CD8-positive, alpha-beta memory T cell (primary cell): ENCODE measurements at regions of chr19 and their contacts with region 1.

Region 1: DNA sequence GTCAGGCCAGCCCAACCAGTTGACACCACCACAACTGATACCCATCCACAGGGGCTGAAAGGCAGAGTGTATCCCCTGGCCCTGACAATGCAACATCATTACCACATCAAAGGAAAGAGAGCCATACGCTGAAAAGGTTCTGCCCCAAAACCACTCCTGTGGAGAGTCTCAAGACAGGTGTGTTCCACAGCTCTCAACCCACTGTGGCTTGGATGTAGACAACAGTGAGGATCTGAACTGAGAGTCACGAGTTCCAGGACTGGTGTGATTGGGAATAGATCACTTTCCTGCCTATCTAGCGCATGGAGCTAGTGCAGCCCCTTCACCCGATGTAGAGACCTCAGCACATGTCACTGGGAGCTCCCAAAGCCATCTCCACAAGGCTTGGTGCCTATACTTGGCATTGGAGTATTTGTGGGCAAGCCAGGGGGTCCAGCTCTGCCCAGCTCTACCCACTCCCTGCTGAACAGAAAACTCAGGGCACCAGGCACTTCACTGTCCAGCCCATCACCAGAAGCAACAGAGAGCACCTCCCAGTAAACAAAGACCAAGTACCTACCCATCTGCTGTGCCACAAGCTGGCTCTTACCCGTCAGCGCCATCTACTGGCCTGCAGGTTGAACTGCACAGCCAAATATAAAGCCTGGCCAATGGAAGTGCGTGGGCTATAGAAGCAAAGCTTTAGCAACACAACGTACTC is 579.5 kb downstream of the UQCRFS1 start:
- DNase-seq: peak in 4 of 5 donors; percentile 6 to 50 (median 29)
- H3K4me3 ChIP-seq: no peak overlapping the region
- H3K4me3 Mint-ChIP-seq: peak overlapping the region in 2 of 7 donors; percentile 29 to 63
- H3K27ac ChIP-seq: no peak overlapping the region
- H3K27ac Mint-ChIP-seq: peak overlapping the region in 6 of 8 donors; percentile 68 to 85 (median 80)
- H3K4me1 ChIP-seq: peaks cover 7% of the 10 kb centered on the region
- H3K4me1 Mint-ChIP-seq: peaks cover 15 to 26% (median 22%) of the 10 kb centered on the region in 3 donors
- H3K27me3 ChIP-seq: no peaks in the 10 kb centered on the region
- H3K27me3 Mint-ChIP-seq: no peaks in the 10 kb centered on the region

Region 2: DNA sequence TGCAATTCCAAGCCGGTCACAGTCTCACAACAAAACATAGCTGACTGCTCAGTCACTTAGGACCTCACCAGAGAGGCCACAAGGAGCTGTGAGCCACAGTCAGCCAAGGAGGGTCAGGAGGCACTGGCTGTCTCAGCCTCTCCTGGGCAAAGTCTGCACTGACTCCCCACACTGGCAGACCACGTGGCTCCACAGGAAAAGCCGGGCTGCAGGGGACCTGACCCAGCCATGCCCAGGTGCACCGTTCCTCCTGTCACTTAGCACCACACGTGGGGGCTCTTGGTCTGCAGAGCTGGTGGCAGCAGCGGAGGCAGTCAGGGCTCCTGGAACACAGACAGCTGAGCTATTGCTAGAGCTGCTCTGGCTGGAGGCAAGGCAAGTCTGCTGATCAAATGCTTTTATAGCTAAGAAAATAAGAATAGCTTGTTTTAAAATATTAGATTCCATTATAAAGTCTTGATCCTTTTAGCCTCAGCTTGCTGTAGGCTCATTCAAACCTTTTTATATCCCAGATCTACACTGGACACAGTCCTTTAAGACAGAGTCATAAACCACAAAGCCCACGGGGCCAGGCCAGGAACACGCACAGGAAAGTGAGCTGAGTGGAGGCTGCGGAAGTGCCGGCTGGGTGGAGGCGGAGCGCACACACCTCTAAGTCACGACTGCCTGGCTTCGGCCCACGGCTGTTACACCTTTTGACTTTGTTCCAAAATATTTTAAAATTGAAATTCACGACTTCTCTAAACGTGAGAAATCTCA is 164.6 kb before region 1 on chr19:
- CTCF ChIA-PET with region 1: interaction called, 25 read pairs
- POLR2A ChIA-PET with region 1: no interaction called
- DNase-seq: peak in 2 of 5 donors; percentile 10 to 48
- H3K4me3 ChIP-seq: no peak overlapping the region
- H3K4me3 Mint-ChIP-seq: peak overlapping the region in 6 of 7 donors; percentile 5 to 75 (median 54)
- H3K27ac ChIP-seq: no peak overlapping the region
- H3K27ac Mint-ChIP-seq: peak overlapping the region; percentile 70 to 96 (median 91)
- H3K4me1 ChIP-seq: peaks cover 30% of the 10 kb centered on the region
- H3K4me1 Mint-ChIP-seq: peaks cover 22 to 35% (median 32%) of the 10 kb centered on the region in 3 donors
- H3K27me3 ChIP-seq: no peaks in the 10 kb centered on the region
- H3K27me3 Mint-ChIP-seq: no peaks in the 10 kb centered on the region

Region 3: GRCh38 chr19:28519952-28520861 is 113.3 kb before region 1 on chr19:
- CTCF ChIA-PET with region 1: no interaction called
- POLR2A ChIA-PET with region 1: no interaction called
- DNase-seq: no peak
- H3K4me3 ChIP-seq: no peak overlapping the region
- H3K4me3 Mint-ChIP-seq: no peak overlapping the region
- H3K27ac ChIP-seq: peak overlapping the region; percentile 33
- H3K27ac Mint-ChIP-seq: no peak overlapping the region
- H3K4me1 ChIP-seq: no peaks in the 10 kb centered on the region
- H3K4me1 Mint-ChIP-seq: no peaks in the 10 kb centered on the region
- H3K27me3 ChIP-seq: no peaks in the 10 kb centered on the region
- H3K27me3 Mint-ChIP-seq: peaks cover 0 to 1% of the 10 kb centered on the region in 2 donors

Region 4: GRCh38 chr19:28667348-28667977 is 34.0 kb after region 1 on chr19:
- CTCF ChIA-PET with region 1: no interaction called
- POLR2A ChIA-PET with region 1: no interaction called
- DNase-seq: no peak
- H3K4me3 ChIP-seq: no peak overlapping the region
- H3K4me3 Mint-ChIP-seq: no peak overlapping the region
- H3K27ac ChIP-seq: no peak overlapping the region
- H3K27ac Mint-ChIP-seq: no peak overlapping the region
- H3K4me1 ChIP-seq: no peaks in the 10 kb centered on the region
- H3K4me1 Mint-ChIP-seq: no peaks in the 10 kb centered on the region
- H3K27me3 ChIP-seq: no peaks in the 10 kb centered on the region
- H3K27me3 Mint-ChIP-seq: peaks cover 0 to 3% of the 10 kb centered on the region in 2 donors

Region 5: DNA sequence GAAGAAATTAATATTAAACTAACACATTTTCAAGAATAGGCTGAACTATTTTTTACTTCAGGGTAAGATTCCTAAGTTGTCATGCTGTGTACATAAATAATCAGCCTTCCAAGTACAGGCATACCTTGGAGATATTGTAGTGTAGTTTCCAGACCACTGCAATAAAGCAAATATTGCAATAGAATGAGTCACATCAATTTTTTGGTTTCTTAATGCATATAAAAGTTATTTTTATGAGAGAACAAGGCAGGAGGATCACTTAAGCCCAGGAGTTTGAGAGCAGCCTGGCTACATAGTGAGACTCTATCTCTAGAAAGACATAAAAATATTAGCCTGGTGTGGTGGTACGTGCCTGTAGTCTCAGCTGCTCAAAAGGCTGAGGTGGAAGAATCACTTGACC is 68.0 kb after region 1 on chr19:
- CTCF ChIA-PET with region 1: no interaction called
- POLR2A ChIA-PET with region 1: no interaction called
- DNase-seq: no peak
- H3K4me3 ChIP-seq: no peak overlapping the region
- H3K4me3 Mint-ChIP-seq: no peak overlapping the region
- H3K27ac ChIP-seq: no peak overlapping the region
- H3K27ac Mint-ChIP-seq: no peak overlapping the region
- H3K4me1 ChIP-seq: no peaks in the 10 kb centered on the region
- H3K4me1 Mint-ChIP-seq: no peaks in the 10 kb centered on the region
- H3K27me3 ChIP-seq: no peaks in the 10 kb centered on the region
- H3K27me3 Mint-ChIP-seq: no peaks in the 10 kb centered on the region